H1 (cell line): ENCODE measurements at regions of chr2 and their contacts with region 1.

Region 1: GRCh38 chr2:227766373-227766883 is 20.7 kb downstream of the SCYGR8 start:
- DNase-seq: peak; percentile 70 to 89
- H3K4me3 ChIP-seq: no peak overlapping the region
- H3K27ac ChIP-seq: no peak overlapping the region
- H3K4me1 ChIP-seq: no peaks in the 10 kb centered on the region
- H3K27me3 ChIP-seq: no peaks in the 10 kb centered on the region
- CTCF ChIP-seq: peak; percentile 75 to 91 (median 84)
- EP300 ChIP-seq: no peak
- POLR2A ChIP-seq: no peak
- RAD21 ChIP-seq: peak; percentile 99 to 100

Region 2: DNA sequence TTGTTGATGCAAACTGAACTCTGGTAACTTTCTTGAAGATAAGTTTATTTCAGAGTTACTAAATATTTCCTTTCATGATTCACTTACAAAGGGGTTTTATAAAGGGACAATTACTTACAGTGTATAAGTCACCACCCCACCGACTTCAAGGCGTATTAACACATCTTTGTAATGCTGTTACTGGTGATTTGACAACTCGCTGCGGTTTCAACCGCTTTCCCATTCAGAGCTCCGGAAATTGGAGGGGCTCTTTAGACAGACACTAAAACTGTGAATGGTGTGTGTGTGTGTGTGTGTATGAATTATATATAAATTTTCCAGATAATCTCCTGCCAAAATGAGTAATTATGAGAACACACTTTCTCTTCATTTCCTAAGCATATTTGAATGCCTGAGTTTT is 392.3 kb before region 1 on chr2:
- CTCF ChIA-PET with region 1: interaction called, 11 read pairs
- POLR2A ChIA-PET with region 1: no interaction called
- DNase-seq: no peak
- H3K4me3 ChIP-seq: no peak overlapping the region
- H3K27ac ChIP-seq: no peak overlapping the region
- H3K4me1 ChIP-seq: peaks cover 0 to 6% (median 0%) of the 10 kb centered on the region in 4 experiments; a peak in 1 of 7 replicates
- H3K27me3 ChIP-seq: peaks cover 0 to 2% (median 0%) of the 10 kb centered on the region in 4 experiments; a peak in 1 of 7 replicates
- CTCF ChIP-seq: no peak
- EP300 ChIP-seq: no peak
- POLR2A ChIP-seq: no peak
- RAD21 ChIP-seq: no peak

Region 3: DNA sequence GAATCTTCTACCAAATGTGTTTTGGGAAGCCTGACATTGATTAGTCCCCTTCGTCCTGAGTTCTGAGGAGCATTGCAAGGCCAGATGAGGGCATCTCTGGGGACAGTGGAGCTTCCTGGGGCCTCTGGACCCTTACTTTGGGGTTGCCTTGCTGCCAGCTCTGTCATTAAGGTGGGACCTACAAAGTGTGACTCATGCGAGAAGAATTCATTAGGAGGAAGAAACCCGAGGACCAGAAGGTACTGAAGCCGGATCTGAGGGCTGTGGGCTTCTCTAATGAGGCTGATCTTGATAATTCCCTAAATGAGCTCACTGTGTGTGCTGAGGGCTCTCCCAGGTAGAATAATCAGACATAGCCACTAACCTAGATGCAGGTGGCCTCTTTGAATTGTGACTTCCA is 168.4 kb before region 1 on chr2:
- CTCF ChIA-PET with region 1: interaction called, 14 read pairs
- POLR2A ChIA-PET with region 1: no interaction called
- DNase-seq: no peak
- H3K4me3 ChIP-seq: no peak overlapping the region
- H3K27ac ChIP-seq: no peak overlapping the region
- H3K4me1 ChIP-seq: peaks cover 0 to 7% (median 0%) of the 10 kb centered on the region in 4 experiments; a peak in 2 of 7 replicates
- H3K27me3 ChIP-seq: no peaks in the 10 kb centered on the region
- CTCF ChIP-seq: no peak
- EP300 ChIP-seq: no peak
- POLR2A ChIP-seq: no peak
- RAD21 ChIP-seq: no peak

Region 4: GRCh38 chr2:227657199-227657845 is 109.1 kb before region 1 on chr2:
- CTCF ChIA-PET with region 1: interaction called, 92 read pairs
- POLR2A ChIA-PET with region 1: interaction called, 4 read pairs
- DNase-seq: no peak
- H3K4me3 ChIP-seq: no peak overlapping the region
- H3K27ac ChIP-seq: no peak overlapping the region
- H3K4me1 ChIP-seq: peaks cover 0 to 10% (median 4%) of the 10 kb centered on the region in 4 experiments; a peak in 4 of 7 replicates
- H3K27me3 ChIP-seq: no peaks in the 10 kb centered on the region
- CTCF ChIP-seq: no peak
- EP300 ChIP-seq: no peak
- POLR2A ChIP-seq: no peak
- RAD21 ChIP-seq: no peak

Region 5: DNA sequence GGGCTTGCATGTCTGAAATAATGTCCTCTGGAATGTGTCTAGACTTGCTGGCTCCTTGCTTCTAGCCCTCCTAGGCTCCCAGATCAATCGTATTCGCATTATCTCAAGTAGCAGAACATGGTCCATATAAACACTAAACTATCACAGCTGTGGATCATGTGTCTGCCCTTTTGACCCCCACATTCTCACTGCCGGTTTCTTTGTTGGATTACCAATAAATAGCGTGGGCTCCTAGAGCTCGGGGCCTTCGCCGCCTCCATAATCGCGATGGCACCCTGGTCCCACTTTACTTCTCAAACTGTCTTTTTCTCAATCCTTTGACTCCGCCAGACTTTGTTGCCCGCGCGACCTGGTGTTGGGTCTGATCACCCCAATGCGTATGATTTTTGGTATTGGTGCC is 27.1 kb before region 1 on chr2:
- CTCF ChIA-PET with region 1: interaction called, 44 read pairs
- POLR2A ChIA-PET with region 1: interaction called, 4 read pairs
- DNase-seq: no peak
- H3K4me3 ChIP-seq: no peak overlapping the region
- H3K27ac ChIP-seq: no peak overlapping the region
- H3K4me1 ChIP-seq: peaks cover 0 to 3% (median under 1%) of the 10 kb centered on the region in 4 experiments; a peak in 1 of 7 replicates
- H3K27me3 ChIP-seq: no peaks in the 10 kb centered on the region
- CTCF ChIP-seq: no peak
- EP300 ChIP-seq: no peak
- POLR2A ChIP-seq: no peak
- RAD21 ChIP-seq: no peak

Region 6: DNA sequence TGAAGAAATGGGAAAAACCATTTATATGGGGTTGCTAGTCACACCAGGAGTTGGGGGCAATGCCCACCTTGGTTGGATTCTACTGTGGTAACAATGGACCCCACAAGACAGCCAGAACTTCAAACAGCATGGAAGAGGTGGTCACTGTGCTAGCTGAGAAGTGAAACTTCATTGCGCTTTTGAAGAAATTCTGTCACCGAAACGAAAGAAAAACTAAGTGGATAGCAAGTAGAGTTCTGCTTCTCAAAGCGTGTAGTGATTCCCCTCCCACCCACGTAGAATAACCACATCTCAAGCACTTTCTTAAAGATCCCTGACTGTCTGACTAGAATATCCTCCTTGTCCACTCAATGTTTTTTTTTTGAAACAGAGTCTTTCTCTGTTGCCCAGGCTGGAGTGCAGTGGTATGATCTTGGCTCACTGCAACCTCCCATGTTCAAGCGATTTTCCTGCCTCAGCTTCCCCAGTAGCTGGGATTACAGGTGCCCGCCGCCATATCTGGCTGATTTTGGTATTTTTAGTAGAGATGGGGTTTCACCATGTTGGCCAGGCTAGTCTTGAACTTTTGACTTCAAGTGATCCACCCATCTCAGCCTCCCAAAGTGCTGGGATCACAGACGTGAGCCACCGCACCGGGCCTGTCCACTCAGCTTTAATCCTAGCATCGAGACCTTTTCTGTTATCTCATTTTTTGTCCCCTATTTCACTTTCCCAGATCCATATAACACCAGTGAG is 17.1 kb after region 1 on chr2:
- CTCF ChIA-PET with region 1: interaction called, 25 read pairs
- POLR2A ChIA-PET with region 1: no interaction called
- DNase-seq: no peak
- H3K4me3 ChIP-seq: no peak overlapping the region
- H3K27ac ChIP-seq: no peak overlapping the region
- H3K4me1 ChIP-seq: no peaks in the 10 kb centered on the region
- H3K27me3 ChIP-seq: no peaks in the 10 kb centered on the region
- CTCF ChIP-seq: no peak
- EP300 ChIP-seq: no peak
- POLR2A ChIP-seq: no peak
- RAD21 ChIP-seq: no peak